ENCODE measurements at regions of chr6 and their contacts with region 1.

Region 1: GRCh38 chr6:13574149-13574570 is 241 bp upstream of the SIRT5 start:
- DNase-seq: peak; percentile 97
- H3K4me3 Mint-ChIP-seq: peak overlapping the region; percentile 97
- H3K27ac Mint-ChIP-seq: peak overlapping the region; percentile 100
- H3K4me1 Mint-ChIP-seq: peaks cover 18% of the 10 kb centered on the region
- H3K27me3 Mint-ChIP-seq: no peaks in the 10 kb centered on the region

Region 2: DNA sequence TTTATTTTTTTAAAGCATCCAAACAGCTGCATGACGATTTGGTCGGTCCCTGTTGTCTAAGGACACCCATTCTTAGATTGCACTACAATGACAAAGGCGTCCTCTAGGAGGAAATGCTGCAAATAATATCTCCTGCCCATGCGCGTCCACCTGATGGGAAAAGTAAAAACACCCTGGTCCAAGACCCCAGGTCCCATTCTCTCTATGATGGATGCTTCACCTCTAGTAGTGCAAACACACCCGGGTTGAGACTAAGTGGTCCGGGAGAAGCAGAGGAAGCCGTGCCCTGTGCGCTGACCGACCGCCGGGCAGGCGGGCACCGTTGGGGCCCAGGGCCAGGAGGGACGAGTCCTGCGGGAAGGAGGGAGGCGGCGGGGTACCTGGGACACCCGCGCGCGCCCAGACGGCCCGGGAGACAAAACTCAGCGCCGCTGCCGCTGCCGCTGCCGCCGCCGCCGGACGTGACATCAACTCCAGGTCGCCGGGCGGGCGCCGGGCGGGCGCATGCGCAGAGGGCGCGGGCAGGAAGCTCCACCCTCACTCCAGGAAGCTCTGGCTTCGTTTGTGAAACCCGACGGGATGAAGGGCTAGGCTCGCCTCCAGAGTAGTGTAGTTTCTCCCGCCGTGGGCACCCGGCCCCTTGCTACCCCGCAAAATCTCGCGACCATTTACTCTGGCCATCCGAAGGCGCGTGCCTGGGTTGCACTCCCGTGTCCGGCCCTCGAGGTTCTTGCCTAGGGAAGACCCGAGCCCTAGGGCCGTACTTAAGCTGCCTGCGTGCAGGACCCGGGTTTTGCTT is 245.9 kb before region 1 on chr6 and contains the start of gene TBC1D7:
- intact Hi-C with region 1: loop called (anchors 1 kb)
- DNase-seq: peak; percentile 98
- H3K4me3 Mint-ChIP-seq: peak within 1 kb of the TSS; percentile 85
- H3K27ac Mint-ChIP-seq: peak within 1 kb of the TSS; percentile 96
- H3K4me1 Mint-ChIP-seq: peaks cover 34% of the 10 kb centered on the region
- H3K27me3 Mint-ChIP-seq: no peaks in the 10 kb centered on the region
- total RNA-seq, gene TBC1D7: 25.1 and 26.8 TPM in 2 replicates

Region 3: DNA sequence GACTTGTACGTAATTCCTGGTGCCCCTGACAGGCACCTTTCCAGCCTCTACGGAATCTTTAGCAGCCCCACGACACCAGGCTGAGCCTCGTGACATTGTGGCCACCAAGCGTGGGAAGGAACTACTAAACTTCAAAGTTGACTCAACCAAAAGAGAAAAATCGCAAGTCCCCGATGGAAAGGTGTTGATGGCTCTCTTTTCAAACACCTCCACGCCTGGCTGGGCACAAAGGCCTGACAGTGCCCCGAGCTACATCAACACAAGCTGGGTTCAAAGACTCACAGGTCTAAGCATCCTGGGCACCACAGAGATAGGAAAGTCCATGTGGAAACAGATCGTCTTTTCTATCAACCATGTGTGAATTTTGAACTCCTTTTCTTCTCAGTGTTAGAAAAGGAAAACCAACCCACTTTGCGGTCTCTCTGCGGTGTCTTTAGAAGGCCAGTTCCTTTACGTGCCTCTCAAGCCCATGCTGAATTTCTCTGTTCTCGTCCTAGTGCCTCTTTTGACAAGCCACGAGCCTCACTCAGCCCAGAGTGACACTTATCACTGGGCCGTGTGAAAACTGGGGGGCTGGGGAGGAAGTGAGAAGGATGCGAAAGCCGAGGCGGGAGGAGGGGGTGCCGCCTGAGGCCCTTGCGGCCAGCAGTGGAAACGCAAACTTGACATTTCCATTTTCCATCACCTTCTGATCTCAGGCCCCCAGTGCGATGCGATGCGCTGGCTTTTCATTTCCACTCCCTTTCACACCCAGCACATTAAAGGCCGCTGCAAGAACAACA is 146.2 kb before region 1 on chr6:
- intact Hi-C with region 1: loop called (anchors 1 kb)
- DNase-seq: peak; percentile 89
- H3K4me3 Mint-ChIP-seq: peak overlapping the region; percentile 71
- H3K27ac Mint-ChIP-seq: peak overlapping the region; percentile 96
- H3K4me1 Mint-ChIP-seq: peaks cover 65% of the 10 kb centered on the region
- H3K27me3 Mint-ChIP-seq: no peaks in the 10 kb centered on the region

Region 4: GRCh38 chr6:13487122-13488014 is 86.8 kb before region 1 on chr6 and contains the start of gene GFOD1:
- intact Hi-C with region 1: loop called (anchors 2 kb)
- DNase-seq: peak; percentile 95
- H3K4me3 Mint-ChIP-seq: peak within 1 kb of the TSS; percentile 96
- H3K27ac Mint-ChIP-seq: peak within 1 kb of the TSS; percentile 88
- H3K4me1 Mint-ChIP-seq: peaks cover 42% of the 10 kb centered on the region
- H3K27me3 Mint-ChIP-seq: peaks cover 11% of the 10 kb centered on the region
- total RNA-seq, gene GFOD1: 9.8 and 10.2 TPM in 2 replicates

Region 5: DNA sequence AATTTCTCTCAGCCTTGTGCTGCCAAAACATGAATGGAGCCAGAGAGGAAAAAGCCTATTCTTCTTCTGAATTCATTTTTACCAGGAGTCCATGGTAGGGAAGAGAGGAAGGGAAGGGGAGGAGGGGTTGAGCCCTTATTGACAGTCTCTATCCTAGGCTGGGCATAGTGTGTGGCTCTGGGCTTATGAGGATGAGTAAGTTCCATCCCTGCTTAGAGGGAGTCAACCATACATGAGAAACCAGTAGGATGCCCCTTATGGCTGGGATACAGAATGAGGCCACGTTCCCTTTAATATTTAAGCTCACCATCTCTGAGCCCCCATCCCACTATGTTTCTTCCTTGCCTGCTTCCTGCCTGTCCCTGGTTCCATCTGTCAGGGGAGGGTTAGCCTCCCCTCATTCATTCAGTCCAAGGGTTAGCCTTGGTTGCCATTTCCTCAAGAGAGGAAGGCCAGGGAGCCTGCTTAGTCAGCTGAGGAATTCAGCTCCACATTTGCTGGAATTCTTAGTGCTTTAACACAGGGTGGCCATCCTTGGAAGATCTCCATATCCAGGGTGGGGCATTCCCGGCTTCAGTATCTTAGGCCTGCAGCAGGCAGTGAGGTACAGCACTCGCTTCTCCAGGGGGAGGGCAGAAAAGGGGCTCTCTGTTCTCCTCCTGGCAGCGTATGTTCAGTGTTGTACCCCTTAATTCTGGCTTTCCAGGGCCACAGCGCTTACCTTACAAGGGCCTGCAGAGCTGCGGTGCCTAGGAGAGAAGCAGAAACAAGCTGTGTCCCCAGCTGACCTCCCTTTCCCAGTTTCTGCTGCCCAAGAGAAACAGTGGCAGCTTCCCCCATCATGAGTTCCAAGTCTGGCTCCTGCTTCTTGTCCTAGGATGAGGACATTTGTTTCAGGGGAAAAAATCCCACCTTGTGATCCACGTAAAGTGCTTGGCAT is 12.7 kb after region 1 on chr6:
- intact Hi-C with region 1: no loop called
- DNase-seq: no peak
- H3K4me3 Mint-ChIP-seq: no peak overlapping the region
- H3K27ac Mint-ChIP-seq: no peak overlapping the region
- H3K4me1 Mint-ChIP-seq: no peaks in the 10 kb centered on the region
- H3K27me3 Mint-ChIP-seq: no peaks in the 10 kb centered on the region

Region 6: DNA sequence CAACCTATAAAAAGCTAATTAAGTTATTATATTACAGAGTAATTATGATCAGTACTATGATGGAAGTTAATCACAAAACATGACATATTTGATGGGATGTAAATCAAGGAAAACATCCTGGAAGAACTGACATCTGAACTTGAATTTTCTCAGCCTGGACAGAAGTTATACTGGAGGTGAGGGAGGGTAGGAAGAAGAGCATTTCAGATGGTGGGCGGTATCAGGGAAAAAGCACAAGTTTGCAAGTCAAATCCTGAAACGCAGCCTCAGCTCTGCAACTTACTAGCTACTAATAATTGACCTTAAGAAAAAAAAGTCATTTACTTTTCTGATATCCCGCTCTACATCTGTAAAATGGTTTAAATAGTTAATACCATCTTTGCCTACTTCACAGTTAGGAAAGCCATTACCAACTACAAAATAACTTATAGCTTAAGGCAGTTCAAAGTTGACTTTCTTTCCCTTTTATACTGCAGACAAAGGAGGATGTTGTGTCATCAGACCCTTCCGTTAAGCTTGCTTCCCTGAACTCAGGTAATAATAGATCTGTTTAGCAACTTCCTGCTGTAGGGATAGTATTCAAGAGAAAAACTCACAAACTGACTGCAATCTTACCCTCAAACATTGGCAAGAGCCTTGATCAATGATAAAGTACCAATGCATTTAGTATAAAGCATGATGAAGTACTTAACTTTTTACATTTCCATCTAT is 61.9 kb after region 1 on chr6:
- intact Hi-C with region 1: no loop called
- DNase-seq: no peak
- H3K4me3 Mint-ChIP-seq: peak overlapping the region; percentile 11
- H3K27ac Mint-ChIP-seq: peak overlapping the region; percentile 63
- H3K4me1 Mint-ChIP-seq: peaks cover 27% of the 10 kb centered on the region
- H3K27me3 Mint-ChIP-seq: no peaks in the 10 kb centered on the region

Region 7: GRCh38 chr6:13795041-13795750 is 221.0 kb after region 1 on chr6:
- intact Hi-C with region 1: loop called (anchors 1 kb)
- DNase-seq: peak; percentile 95
- H3K4me3 Mint-ChIP-seq: no peak overlapping the region
- H3K27ac Mint-ChIP-seq: peak overlapping the region; percentile 51
- H3K4me1 Mint-ChIP-seq: peaks cover 14% of the 10 kb centered on the region
- H3K27me3 Mint-ChIP-seq: no peaks in the 10 kb centered on the region

Measured in activated CD4-positive, alpha-beta T cell treated with anti-CD3 and anti-CD28 coated beads, Interleukin-2, amount 10 ng/mL, durations not matched to agents 24 days and 14 days (primary cell).